ENCODE measurements at regions of chr6 and their contacts with region 1.

Region 1: GRCh38 chr6:78995946-78996345 is 82.1 kb downstream of the PHIP start:
- DNase-seq: no peak
- H3K4me3 ChIP-seq: no peak overlapping the region
- H3K4me3 Mint-ChIP-seq: no peak overlapping the region
- H3K27ac ChIP-seq: no peak overlapping the region
- H3K27ac Mint-ChIP-seq: peak overlapping the region in 1 of 7 donors; percentile 19
- H3K4me1 ChIP-seq: no peaks in the 10 kb centered on the region
- H3K4me1 Mint-ChIP-seq: peaks cover 0 to 9% (median 2%) of the 10 kb centered on the region in 4 donors
- H3K27me3 ChIP-seq: no peaks in the 10 kb centered on the region
- H3K27me3 Mint-ChIP-seq: no peaks in the 10 kb centered on the region

Region 2: GRCh38 chr6:79009819-79010218 is 13.9 kb after region 1 on chr6:
- CTCF ChIA-PET with region 1: no interaction called
- POLR2A ChIA-PET with region 1: no interaction called
- intact Hi-C with region 1: no loop called
- DNase-seq: no peak
- H3K4me3 ChIP-seq: no peak overlapping the region
- H3K4me3 Mint-ChIP-seq: no peak overlapping the region
- H3K27ac ChIP-seq: no peak overlapping the region
- H3K27ac Mint-ChIP-seq: peak overlapping the region in 1 of 7 donors; percentile 34
- H3K4me1 ChIP-seq: no peaks in the 10 kb centered on the region
- H3K4me1 Mint-ChIP-seq: peaks cover 5 to 13% (median 9%) of the 10 kb centered on the region in 4 donors
- H3K27me3 ChIP-seq: no peaks in the 10 kb centered on the region
- H3K27me3 Mint-ChIP-seq: no peaks in the 10 kb centered on the region

Region 3: GRCh38 chr6:79040083-79040482 is 44.1 kb after region 1 on chr6:
- CTCF ChIA-PET with region 1: no interaction called
- POLR2A ChIA-PET with region 1: no interaction called
- intact Hi-C with region 1: loop called (anchors 5 kb)
- DNase-seq: no peak
- H3K4me3 ChIP-seq: no peak overlapping the region
- H3K4me3 Mint-ChIP-seq: no peak overlapping the region
- H3K27ac ChIP-seq: no peak overlapping the region
- H3K27ac Mint-ChIP-seq: no peak overlapping the region
- H3K4me1 ChIP-seq: peaks cover 33% of the 10 kb centered on the region
- H3K4me1 Mint-ChIP-seq: peaks cover 38 to 69% (median 55%) of the 10 kb centered on the region in 4 donors
- H3K27me3 ChIP-seq: no peaks in the 10 kb centered on the region
- H3K27me3 Mint-ChIP-seq: no peaks in the 10 kb centered on the region

Region 4: DNA sequence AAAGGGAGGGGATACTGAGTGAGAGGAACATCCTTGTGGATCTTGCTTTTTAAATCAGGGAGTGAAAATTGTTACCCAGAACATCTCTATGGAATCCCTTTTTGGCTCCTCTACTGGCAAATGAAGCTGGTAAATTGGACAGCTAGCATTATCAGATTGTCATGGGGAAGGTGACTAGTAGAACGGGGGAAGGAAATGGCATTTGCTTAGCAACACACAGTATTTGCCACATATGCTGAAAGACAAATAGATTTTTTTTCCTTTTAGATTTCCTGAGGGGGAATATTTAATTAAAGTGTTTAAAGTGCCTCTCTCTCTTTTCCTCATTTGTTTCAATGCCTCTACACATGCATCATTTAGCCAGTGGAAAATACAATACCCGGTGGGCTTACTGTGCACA is 1684.0 kb after region 1 on chr6:
- CTCF ChIA-PET with region 1: no interaction called
- POLR2A ChIA-PET with region 1: no interaction called
- intact Hi-C with region 1: no loop called
- DNase-seq: no peak
- H3K4me3 ChIP-seq: no peak overlapping the region
- H3K4me3 Mint-ChIP-seq: no peak overlapping the region
- H3K27ac ChIP-seq: no peak overlapping the region
- H3K27ac Mint-ChIP-seq: no peak overlapping the region
- H3K4me1 ChIP-seq: no peaks in the 10 kb centered on the region
- H3K4me1 Mint-ChIP-seq: no peaks in the 10 kb centered on the region
- H3K27me3 ChIP-seq: no peaks in the 10 kb centered on the region
- H3K27me3 Mint-ChIP-seq: no peaks in the 10 kb centered on the region